HepG2 (cell line): ENCODE measurements at regions of chr2 and their contacts with region 1.

Region 1: GRCh38 chr2:41644936-41645335 is 402.9 kb upstream of the PKDCC start:
- DNase-seq: no peak
- ATAC-seq: no peak
- H3K4me3 ChIP-seq: no peak overlapping the region
- H3K27ac ChIP-seq: no peak overlapping the region
- H3K4me1 ChIP-seq: no peaks in the 10 kb centered on the region
- H3K27me3 ChIP-seq: no peaks in the 10 kb centered on the region
- CTCF ChIP-seq: no peak
- EP300 ChIP-seq: no peak
- POLR2A ChIP-seq: no peak
- RAD21 ChIP-seq: no peak

Region 2: DNA sequence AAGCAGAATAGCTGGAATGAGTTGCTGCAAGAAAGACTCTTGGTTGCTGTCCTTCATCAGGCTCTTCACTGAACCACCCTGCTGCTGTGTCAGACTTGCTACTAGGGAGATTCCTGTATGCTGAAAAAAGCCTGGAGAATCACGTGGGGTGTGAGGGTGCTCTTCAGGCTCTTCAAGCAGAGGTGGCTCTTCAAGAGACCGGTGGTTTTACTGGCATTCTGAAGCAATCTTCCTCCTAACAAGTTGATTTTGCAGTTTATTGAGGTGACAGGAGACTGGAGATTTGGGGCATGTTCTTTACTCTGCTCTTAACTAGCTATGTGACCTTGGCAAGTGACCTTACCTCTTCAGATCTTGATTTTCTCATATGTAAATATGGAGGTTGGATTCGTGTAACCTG is 1965.1 kb before region 1 on chr2:
- CTCF ChIA-PET with region 1: no interaction called
- POLR2A ChIA-PET with region 1: no interaction called
- in situ Hi-C with region 1: no loop called
- intact Hi-C with region 1: loop called (anchors 5 kb)
- DNase-seq: no peak
- ATAC-seq: no peak; the same call in 2 of the 3 replicates
- H3K4me3 ChIP-seq: no peak overlapping the region
- H3K27ac ChIP-seq: no peak overlapping the region
- H3K4me1 ChIP-seq: peaks cover 5% of the 10 kb centered on the region; the same call in 1 of the 2 replicates
- H3K27me3 ChIP-seq: peaks cover 2 to 17% of the 10 kb centered on the region in 2 experiments; a peak in 3 of 5 replicates
- CTCF ChIP-seq: no peak
- EP300 ChIP-seq: no peak
- POLR2A ChIP-seq: no peak
- RAD21 ChIP-seq: no peak